ENCODE measurements at regions of chr15 and their contacts with region 1.

Region 1: GRCh38 chr15:65832549-65833364 is 36.5 kb upstream of the RAB11A start:
- DNase-seq: peak; percentile 100
- ATAC-seq: peak; percentile 96
- H3K4me3 ChIP-seq: peak overlapping the region; percentile 57 to 74 (median 66)
- H3K27ac ChIP-seq: peak overlapping the region; percentile 100
- H3K4me1 ChIP-seq: peaks cover 84% of the 10 kb centered on the region
- H3K27me3 ChIP-seq: no peaks in the 10 kb centered on the region
- CTCF ChIP-seq: peak; percentile 62
- EP300 ChIP-seq: peak; percentile 88 to 98
- POLR2A ChIP-seq: peak; percentile 78 to 88
- RAD21 ChIP-seq: peak; percentile 51

Region 2: DNA sequence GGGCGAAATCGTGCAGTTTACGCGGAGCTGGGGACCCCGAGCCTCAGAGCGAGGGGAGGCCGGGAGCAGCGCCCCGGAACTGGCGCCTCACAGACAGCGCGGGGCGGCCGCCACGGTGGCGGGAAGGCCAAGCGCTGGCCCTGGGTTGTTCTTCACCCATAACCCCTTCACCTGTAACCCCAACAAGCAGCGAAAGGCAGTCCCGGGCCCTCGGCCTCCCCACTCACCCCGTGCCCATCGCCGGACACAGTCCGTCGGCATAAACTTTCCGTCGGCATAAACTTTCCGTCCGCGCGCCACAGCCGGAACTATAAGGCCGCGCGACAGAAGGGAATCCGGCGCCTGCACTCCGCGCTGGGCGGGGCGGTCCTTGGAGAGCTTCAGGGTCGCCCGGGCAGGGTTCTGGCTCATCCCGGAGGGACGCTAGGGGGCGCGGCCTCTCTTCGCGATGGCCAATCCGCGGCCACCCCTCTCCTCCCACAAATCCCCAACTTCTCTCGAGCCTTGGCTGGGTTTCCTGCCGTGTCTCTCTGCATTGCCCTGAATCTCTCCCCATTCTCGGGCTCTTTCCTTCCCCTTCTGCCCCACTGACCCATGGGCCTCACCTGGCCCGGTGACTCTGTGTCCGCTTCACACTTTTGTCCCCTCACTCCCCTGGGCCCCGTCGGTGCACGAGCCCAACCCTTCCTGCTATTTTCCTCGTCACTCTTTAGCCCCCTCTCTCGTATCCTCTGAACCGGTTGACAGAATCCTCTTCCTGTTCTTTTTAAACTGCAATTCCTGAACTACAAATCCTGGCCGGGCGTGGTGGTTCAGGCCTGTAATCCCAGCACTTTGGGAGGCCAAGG is 221.7 kb before region 1 on chr15 and contains the start of gene INTS14:
- CTCF ChIA-PET with region 1: no interaction called
- POLR2A ChIA-PET with region 1: interaction called, 30 read pairs
- in situ Hi-C with region 1: no loop called
- intact Hi-C with region 1: no loop called
- DNase-seq: peak; percentile 92
- ATAC-seq: peak; percentile 95
- H3K4me3 ChIP-seq: peak within 1 kb of the TSS; percentile 87 to 91 (median 89)
- H3K27ac ChIP-seq: peak within 1 kb of the TSS; percentile 99
- H3K4me1 ChIP-seq: peaks cover 43% of the 10 kb centered on the region
- H3K27me3 ChIP-seq: no peaks in the 10 kb centered on the region; a peak in 1 of 5 replicates
- CTCF ChIP-seq: peak; percentile 93
- EP300 ChIP-seq: peak in 1 of 2 experiments; percentile 68; a peak in 3 of 4 replicates
- POLR2A ChIP-seq: peak; percentile 87 to 91
- RAD21 ChIP-seq: peak; percentile 70
- total RNA-seq, gene INTS14: 52.0 and 57.8 TPM in 2 replicates

Region 3: GRCh38 chr15:65787260-65787659 is 45.5 kb before region 1 on chr15:
- CTCF ChIA-PET with region 1: interaction called, 5 read pairs
- POLR2A ChIA-PET with region 1: interaction called, 35 read pairs
- in situ Hi-C with region 1: no loop called
- intact Hi-C with region 1: loop called (anchors 2 kb)
- DNase-seq: no peak
- ATAC-seq: no peak
- H3K4me3 ChIP-seq: peak overlapping the region in 1 of 3 experiments; percentile 7; a peak in 2 of 6 replicates
- H3K27ac ChIP-seq: peak overlapping the region; percentile 72
- H3K4me1 ChIP-seq: peaks cover 48% of the 10 kb centered on the region
- H3K27me3 ChIP-seq: no peaks in the 10 kb centered on the region; a peak in 1 of 5 replicates
- CTCF ChIP-seq: no peak
- EP300 ChIP-seq: no peak
- POLR2A ChIP-seq: no peak
- RAD21 ChIP-seq: no peak

Region 4: DNA sequence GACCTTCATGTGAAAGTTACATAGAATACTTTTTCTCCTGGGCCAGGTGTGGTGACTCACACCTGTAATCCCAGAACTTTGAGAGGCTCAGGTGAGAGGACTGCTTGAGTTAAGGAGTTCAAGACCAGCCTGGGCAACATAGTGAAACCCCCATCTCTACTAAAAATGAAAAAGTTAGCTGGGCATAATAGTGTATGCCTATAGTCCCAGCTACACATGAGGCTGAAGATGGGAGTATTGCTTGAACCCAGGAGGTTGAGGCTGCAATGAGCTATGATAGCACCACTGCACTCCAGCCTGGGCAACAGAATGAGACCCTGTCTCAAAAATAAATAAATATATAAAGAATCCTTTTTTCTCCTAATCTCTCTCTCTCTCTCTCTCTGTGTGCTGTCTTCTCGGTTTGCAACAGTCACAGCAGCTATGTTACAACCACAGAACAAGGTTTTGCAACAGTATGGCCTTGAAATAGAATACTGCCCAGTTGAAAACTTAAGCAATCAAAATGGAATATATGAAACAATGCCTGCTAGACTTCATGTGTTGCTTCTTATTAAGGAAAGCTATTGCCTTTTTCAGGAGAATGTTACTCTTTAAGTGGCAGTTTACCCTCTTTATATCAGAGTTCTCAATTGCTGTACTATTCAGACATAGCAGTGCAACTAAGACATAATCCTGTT is 28.4 kb before region 1 on chr15:
- CTCF ChIA-PET with region 1: no interaction called
- POLR2A ChIA-PET with region 1: interaction called, 11 read pairs
- in situ Hi-C with region 1: no loop called
- intact Hi-C with region 1: no loop called
- DNase-seq: peak; percentile 91
- ATAC-seq: peak; percentile 94
- H3K4me3 ChIP-seq: peak overlapping the region in 1 of 3 experiments; percentile 21; a peak in 1 of 6 replicates
- H3K27ac ChIP-seq: peak overlapping the region; percentile 64
- H3K4me1 ChIP-seq: peaks cover 55% of the 10 kb centered on the region
- H3K27me3 ChIP-seq: no peaks in the 10 kb centered on the region
- CTCF ChIP-seq: no peak
- EP300 ChIP-seq: peak; percentile 57 to 83; a peak in 3 of 4 replicates
- POLR2A ChIP-seq: no peak
- RAD21 ChIP-seq: no peak

Region 5: DNA sequence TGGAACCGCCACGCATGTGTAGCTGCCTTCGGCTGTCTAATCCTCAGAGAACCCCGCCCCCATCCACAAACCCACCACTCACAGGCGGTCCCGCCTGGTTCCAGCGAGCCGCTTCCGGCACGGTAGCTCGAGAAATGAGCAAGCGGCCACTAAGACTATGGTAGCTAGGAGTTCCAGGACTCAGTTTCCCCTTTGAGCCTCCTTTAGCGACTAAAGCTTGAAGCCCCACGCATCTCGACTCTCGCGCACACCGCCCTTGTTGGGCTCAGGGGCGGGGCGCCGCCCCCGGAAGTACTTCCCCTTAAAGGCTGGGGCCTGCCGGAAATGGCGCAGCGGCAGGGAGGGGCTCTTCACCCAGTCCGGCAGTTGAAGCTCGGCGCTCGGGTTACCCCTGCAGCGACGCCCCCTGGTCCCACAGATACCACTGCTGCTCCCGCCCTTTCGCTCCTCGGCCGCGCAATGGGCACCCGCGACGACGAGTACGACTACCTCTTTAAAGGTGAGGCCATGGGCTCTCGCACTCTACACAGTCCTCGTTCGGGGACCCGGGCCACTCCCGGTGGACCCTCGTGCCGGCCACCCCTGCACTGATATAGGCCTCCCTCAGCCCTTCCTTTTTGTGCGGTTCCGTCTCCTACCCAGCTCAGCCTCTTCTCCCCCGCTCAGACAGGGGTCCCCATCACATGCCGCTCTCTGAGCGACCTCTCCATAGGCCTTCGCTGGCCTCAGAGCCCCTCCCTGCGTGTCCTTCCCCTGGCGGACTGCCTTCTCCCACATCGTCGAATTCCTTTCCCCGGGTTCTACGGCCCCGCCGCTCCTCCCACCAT is 36.6 kb after region 1 on chr15 and contains the start of gene RAB11A:
- CTCF ChIA-PET with region 1: no interaction called
- POLR2A ChIA-PET with region 1: interaction called, 34 read pairs
- in situ Hi-C with region 1: no loop called
- intact Hi-C with region 1: no loop called
- DNase-seq: peak; percentile 93
- ATAC-seq: peak; percentile 95
- H3K4me3 ChIP-seq: peak within 1 kb of the TSS; percentile 68 to 97 (median 88)
- H3K27ac ChIP-seq: peak within 1 kb of the TSS; percentile 87
- H3K4me1 ChIP-seq: peaks cover 47% of the 10 kb centered on the region
- H3K27me3 ChIP-seq: no peaks in the 10 kb centered on the region; a peak in 1 of 5 replicates
- CTCF ChIP-seq: peak; percentile 74
- EP300 ChIP-seq: no peak; a peak in 1 of 4 replicates
- POLR2A ChIP-seq: peak; percentile 93 to 96
- RAD21 ChIP-seq: peak; percentile 29; the same call in 1 of the 2 replicates
- total RNA-seq, gene RAB11A: 161 and 241 TPM in 2 replicates

Region 6: DNA sequence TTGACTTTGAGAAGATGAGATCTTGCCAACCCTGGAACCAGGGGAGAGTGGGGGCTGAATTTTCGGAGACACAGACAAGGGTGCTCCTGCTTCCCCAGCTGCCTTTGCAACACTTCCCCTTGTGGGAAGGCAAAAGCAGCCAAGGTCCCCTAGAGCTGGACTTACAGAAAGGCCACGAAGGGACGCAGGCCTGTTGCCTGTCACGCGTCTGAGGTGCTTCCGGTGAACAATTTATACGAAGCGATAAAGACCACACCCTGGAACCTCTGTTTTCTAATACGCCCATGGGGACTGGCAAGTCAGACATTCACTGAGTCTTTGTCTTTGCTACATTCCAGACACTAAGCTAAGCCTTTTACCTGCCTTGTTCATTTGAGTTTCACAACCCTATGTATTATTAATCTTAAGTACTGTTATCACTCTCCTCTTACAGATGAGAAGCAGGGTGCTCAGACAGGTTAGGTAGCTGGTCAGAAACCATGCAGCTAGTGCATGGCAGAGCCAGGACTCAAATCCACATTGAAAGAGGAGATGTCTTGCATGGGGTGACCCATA is 407.6 kb after region 1 on chr15:
- CTCF ChIA-PET with region 1: no interaction called
- POLR2A ChIA-PET with region 1: no interaction called
- in situ Hi-C with region 1: no loop called
- intact Hi-C with region 1: no loop called
- DNase-seq: no peak
- ATAC-seq: no peak
- H3K4me3 ChIP-seq: no peak overlapping the region
- H3K27ac ChIP-seq: no peak overlapping the region
- H3K4me1 ChIP-seq: no peaks in the 10 kb centered on the region
- H3K27me3 ChIP-seq: peaks cover 7 to 63% of the 10 kb centered on the region in 2 experiments; a peak in 4 of 5 replicates
- CTCF ChIP-seq: no peak
- EP300 ChIP-seq: no peak
- POLR2A ChIP-seq: no peak
- RAD21 ChIP-seq: no peak